Lower leg skin (tissue), 4 donors: ENCODE measurements at regions of chr4 and their contacts with region 1.

Region 1: GRCh38 chr4:39638354-39639240 is at the start of gene SMIM14:
- DNase-seq: peak; percentile 96 to 99
- H3K4me3 ChIP-seq: peak within 1 kb of the TSS; percentile 99
- CTCF ChIP-seq: no peak
- POLR2A ChIP-seq: peak in 1 of 2 donors; percentile 86
- total RNA-seq, gene SMIM14: 25.6 to 49.2 (median 36.4) TPM

Region 2: GRCh38 chr4:39527273-39528060 is 111.1 kb before region 1 on chr4 and contains the start of gene UGDH:
- intact Hi-C with region 1: loop called (anchors 10 kb)
- DNase-seq: peak; percentile 96 to 99
- H3K4me3 ChIP-seq: peak within 1 kb of the TSS; percentile 71
- CTCF ChIP-seq: no peak
- POLR2A ChIP-seq: peak in 1 of 2 donors; percentile 48
- total RNA-seq, gene UGDH: 20.2 to 29.4 (median 24.3) TPM

Region 3: GRCh38 chr4:39591290-39591689 is 47.3 kb before region 1 on chr4:
- intact Hi-C with region 1: no loop called
- DNase-seq: no peak
- H3K4me3 ChIP-seq: no peak overlapping the region
- CTCF ChIP-seq: no peak
- POLR2A ChIP-seq: no peak